H1 (cell line): ENCODE measurements at regions of chr6 and their contacts with region 1.

Region 1: DNA sequence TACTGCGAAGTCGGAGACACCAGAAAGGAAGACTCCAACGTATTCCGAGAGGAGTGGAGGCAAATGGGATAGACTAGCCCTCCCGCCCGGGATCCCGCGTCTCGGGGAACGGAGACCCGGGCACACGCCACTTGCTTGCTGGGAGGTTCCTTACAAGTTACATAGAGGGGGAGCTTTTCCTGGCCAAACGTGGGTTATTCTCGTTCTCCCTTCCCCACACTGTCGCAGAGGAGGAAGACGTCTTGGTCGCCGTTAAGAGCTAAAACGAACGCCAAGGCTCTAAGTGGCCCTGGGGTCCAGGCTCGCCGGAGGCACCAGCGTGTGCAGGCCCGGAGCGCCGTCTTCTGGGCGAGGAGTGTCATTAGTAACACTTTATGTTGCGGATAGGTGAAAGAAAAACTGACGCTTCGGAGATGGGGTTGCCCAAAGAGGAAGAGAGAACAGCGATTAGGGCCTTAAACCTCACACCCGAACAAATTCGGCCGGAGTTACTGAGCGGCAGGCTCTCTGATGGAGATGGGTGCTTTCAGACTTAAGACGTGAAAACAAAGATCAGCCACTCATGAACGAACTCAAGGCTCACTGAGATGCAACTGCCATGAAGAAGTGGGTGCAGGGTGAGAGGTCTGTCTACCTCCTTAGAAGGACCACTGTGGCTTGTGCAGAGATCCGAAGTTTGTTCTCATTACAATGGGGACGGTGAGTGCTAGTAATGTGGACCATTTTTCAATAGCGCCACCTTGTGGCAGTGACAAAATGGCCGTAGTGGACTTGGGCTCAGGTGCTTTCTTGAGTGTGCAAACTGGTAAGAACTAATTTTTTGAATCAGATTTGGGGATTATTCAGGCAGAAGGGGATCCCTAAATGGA is 11.7 kb upstream of the ZNF311 start:
- DNase-seq: peak in 1 of 2 experiments; percentile 90
- H3K4me3 ChIP-seq: peak overlapping the region; percentile 69 to 95 (median 82)
- H3K27ac ChIP-seq: no peak overlapping the region
- H3K4me1 ChIP-seq: no peaks in the 10 kb centered on the region
- H3K27me3 ChIP-seq: peaks cover 0 to 8% (median 3%) of the 10 kb centered on the region in 4 experiments; a peak in 5 of 7 replicates
- CTCF ChIP-seq: peak; percentile 61 to 77 (median 74)
- EP300 ChIP-seq: no peak
- POLR2A ChIP-seq: 0 out of 3 replicates have a peak, but pooled peaks of 1 of the 2 experiments have one; percentile 22
- RAD21 ChIP-seq: peak; percentile 68 to 80

Region 2: GRCh38 chr6:28969129-28969528 is 47.7 kb before region 1 on chr6:
- CTCF ChIA-PET with region 1: interaction called, 17 read pairs
- POLR2A ChIA-PET with region 1: no interaction called
- DNase-seq: peak in 1 of 2 experiments; percentile 76
- H3K4me3 ChIP-seq: no peak overlapping the region
- H3K27ac ChIP-seq: no peak overlapping the region
- H3K4me1 ChIP-seq: no peaks in the 10 kb centered on the region
- H3K27me3 ChIP-seq: no peaks in the 10 kb centered on the region
- CTCF ChIP-seq: peak; percentile 55 to 73 (median 60)
- EP300 ChIP-seq: no peak
- POLR2A ChIP-seq: no peak
- RAD21 ChIP-seq: peak; percentile 15 to 46; a peak in 3 of 4 replicates

Region 3: GRCh38 chr6:28981833-28982475 is 34.8 kb before region 1 on chr6:
- CTCF ChIA-PET with region 1: interaction called, 42 read pairs
- POLR2A ChIA-PET with region 1: interaction called, 7 read pairs
- DNase-seq: peak in 1 of 2 experiments; percentile 89
- H3K4me3 ChIP-seq: peak overlapping the region; percentile 91 to 100 (median 96)
- H3K27ac ChIP-seq: no peak overlapping the region
- H3K4me1 ChIP-seq: peaks cover 0 to 12% (median 2%) of the 10 kb centered on the region in 4 experiments; a peak in 5 of 7 replicates
- H3K27me3 ChIP-seq: peaks cover 0 to 2% (median 0%) of the 10 kb centered on the region in 4 experiments; a peak in 2 of 7 replicates
- CTCF ChIP-seq: peak in 1 of 3 experiments; percentile 10; a peak in 1 of 4 replicates
- EP300 ChIP-seq: no peak
- POLR2A ChIP-seq: no peak
- RAD21 ChIP-seq: no peak; a peak in 1 of 4 replicates

Region 4: GRCh38 chr6:28988536-28989311 is 28.1 kb before region 1 on chr6:
- CTCF ChIA-PET with region 1: interaction called, 42 read pairs
- POLR2A ChIA-PET with region 1: interaction called, 7 read pairs
- DNase-seq: peak; percentile 92 to 98
- H3K4me3 ChIP-seq: peak overlapping the region; percentile 43 to 61 (median 52)
- H3K27ac ChIP-seq: peak overlapping the region; percentile 33; the same call in 1 of the 2 replicates
- H3K4me1 ChIP-seq: peaks cover 0 to 6% (median 2%) of the 10 kb centered on the region in 4 experiments; a peak in 3 of 7 replicates
- H3K27me3 ChIP-seq: peaks cover 0 to 2% (median 0%) of the 10 kb centered on the region in 4 experiments; a peak in 1 of 7 replicates
- CTCF ChIP-seq: peak; percentile 85 to 96 (median 95)
- EP300 ChIP-seq: no peak
- POLR2A ChIP-seq: peak in 1 of 2 experiments; percentile 51; a peak in 1 of 3 replicates
- RAD21 ChIP-seq: peak; percentile 84

Region 5: DNA sequence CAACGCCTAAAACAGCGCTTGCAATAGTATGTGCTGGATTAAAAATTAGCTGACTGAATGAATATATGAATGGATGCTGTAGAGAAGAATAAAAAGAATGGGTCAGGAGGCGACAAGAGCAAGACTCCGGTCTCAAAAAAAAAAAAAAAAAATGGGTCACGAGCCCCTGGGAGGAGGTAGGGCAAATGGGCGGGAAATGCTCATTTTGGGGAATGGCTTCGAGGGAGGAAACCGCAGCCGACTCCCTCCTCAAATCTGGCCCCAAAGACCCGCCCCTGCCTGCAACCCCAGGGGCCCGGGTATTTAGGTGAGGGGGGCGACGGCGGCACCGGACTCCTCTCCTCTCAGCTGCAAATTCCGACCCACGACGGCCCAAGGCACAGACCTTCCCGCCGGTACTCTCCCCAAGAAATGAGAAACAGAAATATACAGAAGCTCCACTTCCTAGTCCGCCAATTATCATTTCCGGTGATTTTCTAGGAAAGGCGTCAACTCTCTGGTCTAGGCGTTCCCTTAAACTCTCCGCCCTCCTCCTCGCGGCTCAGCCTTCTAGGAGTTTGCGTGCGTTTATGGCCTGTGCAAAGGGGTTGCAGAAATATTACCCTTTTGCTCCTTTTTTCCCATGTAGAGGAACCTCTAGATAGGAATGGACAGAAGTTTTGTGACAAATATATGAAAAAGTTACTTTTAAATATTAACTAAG is 11.5 kb before region 1 on chr6 and contains the start of gene ZNF311:
- CTCF ChIA-PET with region 1: interaction called, 20 read pairs
- POLR2A ChIA-PET with region 1: interaction called, 8 read pairs
- DNase-seq: no peak
- H3K4me3 ChIP-seq: peak within 1 kb of the TSS; percentile 47 to 78 (median 51); a peak in 7 of 8 replicates
- H3K27ac ChIP-seq: no peak within 1 kb of the TSS
- H3K4me1 ChIP-seq: peaks cover 0 to 2% (median 0%) of the 10 kb centered on the region in 4 experiments; a peak in 1 of 7 replicates
- H3K27me3 ChIP-seq: peaks cover 0 to 4% (median under 1%) of the 10 kb centered on the region in 4 experiments; a peak in 2 of 7 replicates
- CTCF ChIP-seq: no peak
- EP300 ChIP-seq: no peak
- POLR2A ChIP-seq: peak; percentile 65 to 87
- RAD21 ChIP-seq: no peak
- total RNA-seq, gene ZNF311: 4.2 and 4.3 TPM in 2 replicates

Region 6: DNA sequence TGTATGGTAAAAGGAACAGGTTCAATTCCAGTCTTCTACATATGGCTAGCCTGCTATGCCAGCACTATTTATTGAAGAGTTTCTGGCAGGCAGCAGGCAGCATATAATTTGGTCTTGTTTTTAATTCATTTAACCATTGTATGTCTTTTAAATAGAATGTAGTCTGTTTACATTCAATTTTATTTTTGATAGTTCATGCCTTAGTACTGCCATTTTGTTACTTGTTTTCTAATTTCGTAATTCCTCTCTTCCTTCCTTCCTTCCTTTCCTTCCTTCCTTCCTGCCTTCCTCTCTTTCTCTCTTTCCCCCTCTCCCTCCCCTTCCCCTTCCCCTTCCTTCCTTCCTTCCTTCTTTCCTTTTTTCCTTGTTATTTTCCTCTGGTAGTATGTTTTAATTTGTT is 136.3 kb after region 1 on chr6:
- CTCF ChIA-PET with region 1: no interaction called
- POLR2A ChIA-PET with region 1: no interaction called
- DNase-seq: no peak
- H3K4me3 ChIP-seq: no peak overlapping the region
- H3K27ac ChIP-seq: no peak overlapping the region
- H3K4me1 ChIP-seq: no peaks in the 10 kb centered on the region
- H3K27me3 ChIP-seq: no peaks in the 10 kb centered on the region
- CTCF ChIP-seq: no peak
- EP300 ChIP-seq: no peak
- POLR2A ChIP-seq: no peak
- RAD21 ChIP-seq: no peak